CD4-positive, alpha-beta T cell (primary cell): ENCODE measurements at regions of chr15 and their contacts with region 1.

Region 1: DNA sequence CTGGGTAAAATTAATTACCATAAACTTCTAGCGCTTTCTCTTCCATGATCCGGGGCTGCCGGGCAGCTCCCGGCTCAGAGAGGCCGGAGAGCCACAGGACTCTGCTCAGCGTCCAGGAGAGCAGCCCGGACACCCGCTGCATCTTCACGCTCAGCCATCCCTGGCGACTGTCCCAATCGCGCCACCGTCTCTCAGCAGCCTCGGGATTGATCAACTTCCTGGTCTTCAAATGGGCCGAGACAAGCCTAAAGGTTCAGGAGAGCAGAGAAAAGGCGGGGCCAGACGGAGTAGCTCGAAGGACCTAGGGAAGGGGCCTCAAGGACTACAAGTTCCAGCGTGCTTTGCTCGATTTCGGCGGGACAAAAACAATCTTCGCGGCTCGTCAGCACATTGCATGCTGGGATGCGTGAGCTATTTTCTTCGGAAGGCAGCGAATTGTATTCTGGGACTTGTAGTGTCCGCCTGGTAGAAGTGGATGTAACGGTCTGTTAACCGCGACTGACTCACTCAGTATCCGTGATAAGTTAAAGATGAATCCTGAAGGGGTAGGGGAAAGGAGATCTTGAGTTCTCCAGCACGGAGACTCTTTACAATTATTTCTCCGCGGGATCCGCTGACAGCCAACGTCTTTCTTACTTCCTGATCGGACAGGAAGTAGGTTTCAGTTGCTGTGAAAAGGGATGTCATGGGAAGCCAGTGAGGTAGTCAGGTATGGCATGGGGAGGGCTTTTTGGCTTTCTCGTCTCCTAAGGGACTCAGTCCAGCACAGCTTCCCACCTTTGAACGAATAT is at the start of gene CIAO2A:
- DNase-seq: peak; percentile 79 to 97 (median 87)
- ATAC-seq: peak; percentile 71
- H3K4me3 ChIP-seq: peak within 1 kb of the TSS; percentile 73
- H3K4me3 Mint-ChIP-seq: peak within 1 kb of the TSS; percentile 94
- H3K27ac ChIP-seq: peak within 1 kb of the TSS; percentile 71 to 90
- H3K27ac Mint-ChIP-seq: peak within 1 kb of the TSS; percentile 93
- H3K4me1 ChIP-seq: peaks cover 61% of the 10 kb centered on the region
- H3K4me1 Mint-ChIP-seq: peaks cover 79% of the 10 kb centered on the region
- H3K27me3 ChIP-seq: no peaks in the 10 kb centered on the region
- H3K27me3 Mint-ChIP-seq: no peaks in the 10 kb centered on the region
- CTCF ChIP-seq: no peak
- total RNA-seq, gene CIAO2A: 10.9 to 12.2 TPM

Region 2: DNA sequence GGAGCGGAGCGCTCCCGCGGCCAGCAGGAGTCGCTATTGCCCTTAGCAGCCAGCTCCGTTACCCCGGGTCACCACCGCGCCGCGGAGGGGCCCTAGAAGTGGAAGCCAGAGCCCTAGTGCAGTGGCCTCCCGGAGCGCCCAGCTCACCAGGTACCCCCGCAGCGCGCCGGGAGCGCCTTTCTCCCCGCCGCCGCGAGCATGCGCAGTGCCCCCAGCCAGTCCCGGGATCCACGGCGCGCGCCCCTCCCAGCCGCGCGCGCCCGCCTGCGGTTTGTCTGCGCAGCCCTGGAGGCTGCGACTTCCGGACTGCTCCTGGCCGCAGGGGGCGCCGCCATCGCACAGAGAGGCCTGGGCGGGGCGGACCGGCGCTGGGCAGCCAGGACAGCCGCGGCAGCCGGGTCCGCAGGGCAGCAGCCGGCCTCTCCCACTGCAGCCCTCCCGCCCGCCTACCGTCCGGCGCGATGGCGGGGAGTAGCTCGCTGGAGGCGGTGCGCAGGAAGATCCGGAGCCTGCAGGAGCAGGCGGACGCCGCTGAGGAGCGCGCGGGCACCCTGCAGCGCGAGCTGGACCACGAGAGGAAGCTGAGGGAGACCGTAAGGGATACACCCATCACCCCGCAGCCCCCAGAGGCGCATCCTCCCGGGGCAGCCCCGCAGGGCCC is 1045.6 kb before region 1 on chr15:
- CTCF ChIA-PET with region 1: no interaction called
- POLR2A ChIA-PET with region 1: no interaction called
- intact Hi-C with region 1: loop called in 1 of 2 experiments (anchors 10 kb)
- DNase-seq: peak; percentile 71 to 95 (median 79)
- ATAC-seq: peak; percentile 75
- H3K4me3 ChIP-seq: peak overlapping the region; percentile 72
- H3K4me3 Mint-ChIP-seq: peak overlapping the region; percentile 98
- H3K27ac ChIP-seq: peak overlapping the region in 1 of 2 donors; percentile 31
- H3K27ac Mint-ChIP-seq: peak overlapping the region; percentile 80
- H3K4me1 ChIP-seq: peaks cover 27% of the 10 kb centered on the region
- H3K4me1 Mint-ChIP-seq: peaks cover 35% of the 10 kb centered on the region
- H3K27me3 ChIP-seq: peaks cover 26 to 40% of the 10 kb centered on the region in 2 experiments
- H3K27me3 Mint-ChIP-seq: peaks cover 46% of the 10 kb centered on the region
- CTCF ChIP-seq: peak; percentile 96

Region 3: DNA sequence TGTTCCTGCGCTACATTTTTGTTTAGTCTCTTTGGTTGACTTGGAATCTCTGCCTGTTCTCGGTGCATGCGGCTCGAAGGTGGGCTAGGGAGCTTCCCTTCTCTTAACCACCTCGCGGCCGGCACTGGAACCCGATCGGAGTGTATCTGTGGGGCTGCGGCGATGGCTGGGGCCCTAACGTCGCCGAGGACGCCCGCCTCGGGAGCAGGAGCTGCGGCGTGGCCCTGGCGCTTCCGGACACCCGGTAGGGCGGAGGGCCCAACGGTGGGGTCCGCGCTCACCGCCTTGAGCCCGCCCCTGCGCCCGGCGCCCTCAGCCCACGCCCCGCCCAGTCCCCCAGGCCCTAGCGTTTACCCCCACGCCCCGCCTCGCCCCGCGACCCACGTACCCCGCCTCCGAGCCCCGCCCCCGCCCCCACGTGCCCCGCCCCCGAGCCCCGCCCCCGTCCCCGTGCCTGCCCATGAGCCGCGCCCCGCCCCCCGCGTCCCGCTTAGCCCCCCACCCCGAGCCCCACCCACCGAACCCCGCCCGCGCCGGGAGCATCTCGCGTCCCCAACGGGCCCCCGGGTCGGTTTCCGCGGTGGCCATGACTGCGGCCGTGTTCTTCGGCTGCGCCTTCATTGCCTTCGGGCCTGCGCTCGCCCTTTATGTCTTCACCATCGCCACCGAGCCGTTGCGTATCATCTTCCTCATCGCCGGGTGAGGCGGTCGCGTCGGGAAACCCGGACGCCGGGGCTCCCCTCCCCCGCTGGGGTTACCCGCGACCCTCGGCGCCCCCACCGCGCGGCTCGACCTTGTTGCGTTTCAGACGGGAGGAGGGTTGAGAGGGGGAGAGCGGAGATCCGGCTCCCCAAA is 816.6 kb before region 1 on chr15 and contains the start of gene APH1B:
- CTCF ChIA-PET with region 1: no interaction called
- POLR2A ChIA-PET with region 1: no interaction called
- intact Hi-C with region 1: loop called in 1 of 2 experiments (anchors 10 kb)
- DNase-seq: peak; percentile 61 to 94 (median 79)
- ATAC-seq: peak; percentile 88
- H3K4me3 ChIP-seq: peak within 1 kb of the TSS; percentile 86
- H3K4me3 Mint-ChIP-seq: peak within 1 kb of the TSS; percentile 91
- H3K27ac ChIP-seq: peak within 1 kb of the TSS; percentile 71 to 80
- H3K27ac Mint-ChIP-seq: peak within 1 kb of the TSS; percentile 82
- H3K4me1 ChIP-seq: peaks cover 25% of the 10 kb centered on the region
- H3K4me1 Mint-ChIP-seq: peaks cover 48% of the 10 kb centered on the region
- H3K27me3 ChIP-seq: no peaks in the 10 kb centered on the region
- H3K27me3 Mint-ChIP-seq: no peaks in the 10 kb centered on the region
- CTCF ChIP-seq: no peak
- total RNA-seq, gene APH1B: 9.3 to 11.6 TPM

Region 4: DNA sequence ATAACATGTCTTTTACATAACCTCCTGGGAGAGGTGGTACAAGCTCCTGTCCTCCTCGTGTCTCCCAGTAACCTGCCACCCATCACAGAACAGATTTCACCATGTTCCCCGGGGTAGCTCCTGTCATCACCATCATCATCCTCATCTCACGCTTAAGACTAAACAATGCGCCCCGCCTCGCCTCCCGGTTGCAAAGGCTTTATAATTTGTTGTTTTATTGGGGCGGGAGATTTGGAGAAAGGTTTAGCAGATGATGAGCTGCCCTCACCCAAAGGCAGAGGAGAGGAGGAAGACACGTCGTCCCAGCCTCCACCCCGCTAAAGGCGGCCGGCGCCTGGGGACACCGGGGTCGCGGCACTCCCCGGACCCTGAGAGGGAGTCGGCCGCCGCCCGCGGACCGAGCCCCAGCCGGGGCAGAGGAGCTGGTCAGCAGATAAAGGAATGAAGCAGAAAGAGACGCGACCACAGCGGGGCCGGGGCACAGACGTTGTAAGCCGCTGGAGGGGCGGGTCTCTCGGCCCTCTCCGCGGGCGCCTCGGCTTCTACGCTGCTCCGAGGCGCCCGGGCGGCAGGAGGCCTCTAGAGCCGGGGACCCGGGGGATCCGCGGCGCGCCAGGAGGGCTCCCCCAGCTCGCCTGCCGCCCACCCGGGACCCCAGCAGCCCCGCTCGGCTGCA is 260.7 kb before region 1 on chr15:
- CTCF ChIA-PET with region 1: interaction called, 4 read pairs
- POLR2A ChIA-PET with region 1: interaction called, 10 read pairs
- intact Hi-C with region 1: loop called in 1 of 2 experiments (anchors 10 kb)
- DNase-seq: peak; percentile 7 to 46 (median 19)
- ATAC-seq: peak; percentile 21
- H3K4me3 ChIP-seq: peak overlapping the region; percentile 92
- H3K4me3 Mint-ChIP-seq: peak overlapping the region; percentile 98
- H3K27ac ChIP-seq: peak overlapping the region; percentile 63 to 93
- H3K27ac Mint-ChIP-seq: peak overlapping the region; percentile 99
- H3K4me1 ChIP-seq: peaks cover 23% of the 10 kb centered on the region
- H3K4me1 Mint-ChIP-seq: peaks cover 67% of the 10 kb centered on the region
- H3K27me3 ChIP-seq: no peaks in the 10 kb centered on the region
- H3K27me3 Mint-ChIP-seq: no peaks in the 10 kb centered on the region
- CTCF ChIP-seq: no peak

Region 5: DNA sequence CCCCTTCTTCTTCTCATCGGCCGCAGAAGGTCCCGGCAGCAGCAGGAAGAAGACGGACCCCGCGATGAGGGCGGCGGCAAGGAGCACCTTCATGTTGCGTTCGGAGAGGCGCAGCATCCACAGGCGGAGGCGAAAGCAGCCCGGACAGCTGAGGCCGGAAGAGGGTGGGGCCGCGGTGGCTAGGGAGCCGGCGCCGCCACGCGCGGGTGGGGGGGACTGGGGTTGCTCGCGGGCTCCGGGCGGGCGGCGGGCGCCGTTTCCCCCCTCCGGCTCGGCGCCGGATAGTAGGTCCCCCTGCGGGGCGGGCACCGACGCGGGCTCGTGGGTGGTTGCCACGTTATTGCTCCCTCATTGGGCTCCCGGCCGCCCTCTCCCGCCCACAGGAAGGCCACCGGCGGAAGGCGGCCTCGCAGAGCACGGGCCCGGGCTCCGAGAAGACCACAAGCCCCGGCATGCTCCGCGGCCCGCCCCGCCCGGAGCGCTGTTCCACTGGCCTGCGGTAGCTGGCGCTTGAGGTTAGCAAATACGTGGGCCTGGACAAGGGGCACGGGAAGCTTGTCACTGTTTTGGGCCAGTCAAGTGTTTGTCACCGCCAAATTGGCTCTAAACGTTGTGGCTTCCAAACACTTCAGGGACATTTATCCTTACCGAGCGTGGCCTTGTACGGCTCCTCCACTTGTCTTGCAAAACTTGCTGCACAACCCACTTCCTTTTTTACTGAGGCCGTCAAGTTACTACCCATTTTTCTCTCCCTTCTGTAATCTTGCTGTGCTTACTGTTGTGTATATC is 69.2 kb after region 1 on chr15 and contains the start of gene PPIB:
- CTCF ChIA-PET with region 1: interaction called, 7 read pairs
- POLR2A ChIA-PET with region 1: interaction called, 23 read pairs
- intact Hi-C with region 1: loop called in 1 of 2 experiments (anchors 2 kb)
- DNase-seq: peak; percentile 91 to 98 (median 96)
- ATAC-seq: peak; percentile 92
- H3K4me3 ChIP-seq: peak within 1 kb of the TSS; percentile 77
- H3K4me3 Mint-ChIP-seq: peak within 1 kb of the TSS; percentile 89
- H3K27ac ChIP-seq: peak within 1 kb of the TSS; percentile 77 to 80
- H3K27ac Mint-ChIP-seq: peak within 1 kb of the TSS; percentile 87
- H3K4me1 ChIP-seq: peaks cover 57% of the 10 kb centered on the region
- H3K4me1 Mint-ChIP-seq: peaks cover 48% of the 10 kb centered on the region
- H3K27me3 ChIP-seq: no peaks in the 10 kb centered on the region
- H3K27me3 Mint-ChIP-seq: no peaks in the 10 kb centered on the region
- CTCF ChIP-seq: peak; percentile 42
- total RNA-seq, gene PPIB: 167 to 169 TPM

Region 6: GRCh38 chr15:64387562-64388168 is 293.8 kb after region 1 on chr15 and contains the start of gene TRIP4:
- CTCF ChIA-PET with region 1: no interaction called
- POLR2A ChIA-PET with region 1: interaction called, 7 read pairs
- intact Hi-C with region 1: loop called in 1 of 2 experiments (anchors 10 kb)
- DNase-seq: peak; percentile 94 to 98 (median 96)
- ATAC-seq: peak; percentile 99
- H3K4me3 ChIP-seq: peak within 1 kb of the TSS; percentile 76
- H3K4me3 Mint-ChIP-seq: peak within 1 kb of the TSS; percentile 98
- H3K27ac ChIP-seq: peak within 1 kb of the TSS in 1 of 2 donors; percentile 8
- H3K27ac Mint-ChIP-seq: peak within 1 kb of the TSS; percentile 81
- H3K4me1 ChIP-seq: peaks cover 26% of the 10 kb centered on the region
- H3K4me1 Mint-ChIP-seq: peaks cover 18% of the 10 kb centered on the region
- H3K27me3 ChIP-seq: no peaks in the 10 kb centered on the region
- H3K27me3 Mint-ChIP-seq: no peaks in the 10 kb centered on the region
- CTCF ChIP-seq: no peak
- total RNA-seq, gene TRIP4: 9.6 to 10.7 TPM